MCF 10A (cell line): ENCODE measurements at regions of chr17 and their contacts with region 1.

Region 1: DNA sequence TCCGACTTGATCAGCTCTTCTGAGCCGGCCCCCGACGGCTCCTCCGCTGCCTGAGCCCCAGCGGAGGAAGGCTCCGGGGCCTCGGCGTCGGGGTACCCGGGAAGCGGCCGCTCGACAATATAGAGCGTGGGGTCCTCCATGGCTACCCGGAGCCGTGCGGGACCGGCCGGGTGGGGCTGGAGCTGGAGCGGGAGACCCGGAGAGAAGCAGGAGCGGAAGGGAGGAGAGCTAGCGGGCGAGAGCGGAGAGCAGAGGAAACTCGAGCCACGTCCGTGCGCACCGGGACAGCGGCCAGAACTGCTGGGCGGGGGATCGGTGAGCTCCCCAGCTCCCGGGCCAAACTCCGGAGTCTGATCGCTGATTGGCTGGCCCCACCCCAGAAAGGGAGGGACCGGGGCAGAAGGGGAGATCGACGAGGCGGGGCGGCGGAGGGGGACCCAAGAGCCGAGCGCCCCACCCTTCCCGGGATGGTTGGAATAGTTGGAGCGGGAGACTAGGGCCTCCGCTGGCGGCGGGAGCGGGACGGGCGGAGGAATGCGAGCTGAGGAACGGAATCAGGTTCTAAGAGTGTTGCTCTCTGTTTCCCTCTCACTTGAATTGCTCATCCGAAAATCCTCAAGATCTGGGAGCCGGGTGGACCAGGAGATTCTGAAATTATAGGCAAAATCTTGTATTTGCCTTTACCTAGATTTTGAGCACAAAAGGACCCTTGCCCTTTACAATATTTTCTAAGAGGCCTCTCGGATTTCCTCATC is at the start of gene CAVIN1:
- DNase-seq: peak; percentile 98
- H3K4me3 Mint-ChIP-seq: peak within 1 kb of the TSS; percentile 96
- H3K27ac Mint-ChIP-seq: peak within 1 kb of the TSS; percentile 88
- H3K4me1 Mint-ChIP-seq: peaks cover 22% of the 10 kb centered on the region
- H3K27me3 Mint-ChIP-seq: no peaks in the 10 kb centered on the region
- CTCF ChIP-seq: no peak
- total RNA-seq, gene CAVIN1: 137 and 143 TPM in 2 replicates

Region 2: DNA sequence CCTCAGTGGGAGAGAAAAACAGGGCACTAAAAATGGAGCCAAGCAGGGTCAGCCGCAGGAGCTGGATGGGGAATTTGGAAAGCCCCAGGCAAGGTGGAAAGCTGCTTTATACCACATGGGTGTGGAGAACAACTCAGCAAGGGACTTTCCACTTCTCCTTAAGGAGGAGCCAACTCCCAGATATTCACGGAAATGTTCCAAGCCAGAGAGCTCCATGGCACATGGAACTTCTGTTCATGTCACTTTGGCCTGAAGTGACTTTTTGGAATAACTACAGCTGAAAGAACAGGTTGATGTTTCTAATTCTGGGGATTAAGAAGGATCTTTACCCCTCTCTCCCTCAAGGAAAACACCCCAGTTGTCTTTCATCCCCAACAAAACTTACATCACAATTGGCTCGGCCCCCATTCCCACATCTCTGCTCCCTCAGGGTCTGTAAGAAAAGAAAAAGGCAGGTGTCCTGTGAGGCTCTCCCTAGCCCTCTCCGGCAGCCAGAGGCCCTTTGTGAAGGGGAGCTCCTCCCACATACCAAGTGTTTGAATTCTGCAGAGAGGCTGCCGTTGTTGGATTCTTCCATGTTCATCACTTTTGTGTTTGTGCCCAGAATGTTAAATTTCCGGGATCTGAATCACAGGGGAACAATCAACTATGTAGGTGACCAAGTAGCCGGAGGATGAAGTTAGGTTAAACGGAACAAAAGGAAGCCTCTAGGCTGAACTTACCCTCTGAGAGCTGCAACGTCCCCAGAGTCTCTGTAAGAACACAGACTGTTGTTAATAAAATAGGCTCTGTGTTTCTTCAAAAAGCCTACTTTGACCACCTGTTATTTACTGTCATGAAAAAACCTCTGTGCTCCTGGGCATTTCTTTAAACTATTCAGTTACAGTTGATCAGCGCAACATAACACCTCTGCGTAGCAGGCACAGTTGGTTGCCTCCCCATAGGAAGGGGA is 93.8 kb before region 1 on chr17:
- CTCF ChIA-PET with region 1: interaction called, 9 read pairs
- POLR2A ChIA-PET with region 1: interaction called, 23 read pairs
- intact Hi-C with region 1: loop called (anchors 5 kb)
- DNase-seq: peak; percentile 87
- H3K4me3 Mint-ChIP-seq: peak overlapping the region; percentile 58
- H3K27ac Mint-ChIP-seq: peak overlapping the region; percentile 91
- H3K4me1 Mint-ChIP-seq: peaks cover 24% of the 10 kb centered on the region
- H3K27me3 Mint-ChIP-seq: no peaks in the 10 kb centered on the region
- CTCF ChIP-seq: no peak

Region 3: DNA sequence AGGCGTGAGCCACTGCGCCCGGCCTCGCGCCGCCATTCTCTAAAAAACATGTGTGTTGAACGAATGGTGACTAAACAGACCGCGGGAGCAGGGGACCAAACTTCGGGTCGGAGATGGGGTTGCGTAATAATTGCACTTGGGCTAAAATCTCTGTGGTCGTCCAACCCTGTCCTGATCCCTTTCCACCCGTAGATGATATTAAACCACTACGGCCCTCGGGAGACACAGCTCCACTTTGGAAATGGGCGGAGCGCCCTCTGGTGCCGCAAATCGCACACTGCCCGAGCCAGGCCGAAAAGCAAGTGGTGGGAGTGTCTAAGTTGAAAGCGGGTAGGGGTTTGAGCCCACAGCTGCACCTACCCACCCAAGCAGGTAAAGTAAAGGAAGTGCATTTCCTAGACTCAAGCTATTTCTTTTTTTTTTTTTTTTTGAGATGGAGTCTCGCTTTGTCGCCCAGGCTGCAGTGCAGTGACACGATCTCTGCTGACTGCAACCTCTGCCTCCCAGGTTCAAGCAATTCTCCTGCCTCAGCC is 17.1 kb before region 1 on chr17:
- CTCF ChIA-PET with region 1: interaction called, 18 read pairs
- POLR2A ChIA-PET with region 1: interaction called, 273 read pairs
- intact Hi-C with region 1: loop called (anchors 1 kb)
- DNase-seq: peak; percentile 73
- H3K4me3 Mint-ChIP-seq: no peak overlapping the region
- H3K27ac Mint-ChIP-seq: peak overlapping the region; percentile 6
- H3K4me1 Mint-ChIP-seq: peaks cover 28% of the 10 kb centered on the region
- H3K27me3 Mint-ChIP-seq: no peaks in the 10 kb centered on the region
- CTCF ChIP-seq: peak; percentile 74

Region 4: DNA sequence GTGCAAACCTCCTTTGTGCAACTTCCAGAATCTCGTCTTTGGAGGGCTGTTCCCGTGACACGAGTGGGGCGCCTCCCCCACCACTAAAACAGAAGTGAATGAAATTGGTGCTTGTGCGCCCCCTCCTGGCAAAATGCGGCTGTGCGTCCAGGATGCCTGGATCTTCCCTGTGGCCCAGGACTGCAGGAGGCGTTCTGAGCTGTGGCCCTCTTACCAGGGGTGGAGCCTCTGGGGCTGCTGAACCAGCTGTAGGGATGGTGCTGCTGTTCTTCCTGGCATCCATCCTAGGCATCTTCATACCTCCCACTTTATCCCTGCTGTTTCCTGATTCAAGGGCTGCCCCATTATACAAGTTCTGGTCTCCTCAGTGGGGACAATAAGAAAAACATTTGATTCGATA is 94.4 kb after region 1 on chr17:
- CTCF ChIA-PET with region 1: interaction called, 5 read pairs
- POLR2A ChIA-PET with region 1: interaction called, 48 read pairs
- intact Hi-C with region 1: loop called (anchors 1 kb)
- DNase-seq: peak; percentile 86
- H3K4me3 Mint-ChIP-seq: no peak overlapping the region
- H3K27ac Mint-ChIP-seq: peak overlapping the region; percentile 98
- H3K4me1 Mint-ChIP-seq: peaks cover 46% of the 10 kb centered on the region
- H3K27me3 Mint-ChIP-seq: no peaks in the 10 kb centered on the region
- CTCF ChIP-seq: peak; percentile 91

Region 5: DNA sequence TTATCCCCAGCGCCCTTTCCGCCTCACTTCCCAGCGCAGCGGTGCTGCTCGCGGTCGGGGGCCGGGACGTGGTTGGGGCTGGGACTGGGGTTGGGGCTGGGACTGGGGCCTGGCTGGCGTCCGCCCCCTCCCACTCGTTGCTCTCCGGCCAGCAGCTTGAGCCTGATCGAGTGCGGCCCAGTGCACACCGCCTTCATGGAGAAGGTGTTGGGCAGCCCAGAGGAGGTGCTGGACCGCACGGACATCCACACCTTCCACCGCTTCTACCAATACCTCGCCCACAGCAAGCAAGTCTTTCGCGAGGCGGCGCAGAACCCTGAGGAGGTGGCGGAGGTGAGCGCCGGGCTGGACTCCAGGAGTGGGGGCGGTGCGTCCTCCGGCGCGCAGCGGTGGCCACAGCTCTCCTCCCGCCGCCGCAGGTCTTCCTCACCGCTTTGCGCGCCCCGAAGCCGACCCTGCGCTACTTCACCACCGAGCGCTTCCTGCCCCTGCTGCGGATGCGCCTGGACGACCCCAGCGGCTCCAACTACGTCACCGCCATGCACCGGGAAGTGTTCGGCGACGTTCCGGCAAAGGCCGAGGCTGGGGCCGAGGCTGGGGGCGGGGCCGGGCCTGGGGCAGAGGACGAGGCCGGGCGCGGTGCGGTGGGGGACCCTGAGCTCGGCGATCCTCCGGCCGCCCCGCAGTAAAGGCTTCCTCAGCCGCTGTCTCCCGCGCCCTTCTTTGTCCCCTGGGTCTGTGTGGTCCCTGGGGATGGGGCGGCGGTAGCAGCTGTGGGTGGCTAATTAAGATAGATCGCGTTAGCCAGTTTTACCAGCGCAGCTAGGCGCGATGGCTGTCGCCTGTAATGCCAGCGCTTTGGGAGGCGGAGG is 131.4 kb after region 1 on chr17:
- CTCF ChIA-PET with region 1: no interaction called
- POLR2A ChIA-PET with region 1: interaction called, 17 read pairs
- intact Hi-C with region 1: no loop called
- DNase-seq: peak; percentile 66
- H3K4me3 Mint-ChIP-seq: peak overlapping the region; percentile 91
- H3K27ac Mint-ChIP-seq: peak overlapping the region; percentile 89
- H3K4me1 Mint-ChIP-seq: peaks cover 7% of the 10 kb centered on the region
- H3K27me3 Mint-ChIP-seq: no peaks in the 10 kb centered on the region
- CTCF ChIP-seq: no peak